Activated T-helper 1 cell treated with anti-CD3 and anti-CD28 coated beads, Interleukin-12 subunit alpha, Interleukin-12 subunit beta, Interleukin-2, Interleukin-4 antibody, amounts not matched to agents 30 ng/mL and 10 ng/mL and 1 ng/mL, durations not matched to agents 14 hours and 24 hours and 36 hours (primary cell): ENCODE measurements at regions of chr5 and their contacts with region 1.

Region 1: DNA sequence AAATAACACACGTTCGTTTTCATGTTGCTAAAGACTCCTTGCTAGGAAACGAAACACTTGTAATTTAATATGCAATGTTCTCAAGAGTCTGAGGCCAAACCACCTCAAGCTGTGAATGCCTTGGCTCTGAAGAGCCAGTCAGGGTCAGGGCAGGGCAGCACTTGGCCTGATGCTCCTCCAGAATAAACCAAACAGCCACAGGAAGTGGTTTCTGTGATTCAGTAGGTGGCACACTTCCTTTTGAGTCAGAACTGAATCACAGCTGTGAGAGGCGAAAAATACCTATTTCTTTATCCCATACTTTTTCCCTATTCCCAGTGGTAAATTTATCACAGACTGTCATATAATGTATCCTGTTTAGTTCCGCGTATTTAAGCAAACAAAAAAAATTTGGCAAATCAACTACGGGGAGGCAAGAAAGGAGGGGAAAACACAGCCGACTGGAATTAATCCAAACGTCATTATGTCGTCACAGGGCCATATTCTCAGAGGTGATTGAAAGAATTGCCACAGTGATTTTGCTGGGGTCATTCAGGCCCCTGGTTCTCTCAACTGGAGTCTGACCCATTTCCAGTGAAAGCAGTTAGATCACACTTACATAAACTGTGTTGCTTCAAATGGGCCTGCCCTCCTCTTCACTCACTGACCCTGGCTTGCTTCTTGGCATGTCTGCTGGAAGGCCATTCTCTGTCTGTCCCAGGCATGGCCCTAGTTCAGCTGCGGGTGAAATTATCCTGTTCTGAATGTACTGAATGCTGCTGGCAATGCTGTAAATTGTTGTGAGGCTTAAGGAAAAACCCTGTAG is 71.2 kb downstream of the ARRDC3 start:
- DNase-seq: peak; percentile 60
- H3K4me3 Mint-ChIP-seq: peak overlapping the region; percentile 77
- H3K27ac Mint-ChIP-seq: peak overlapping the region; percentile 87
- H3K4me1 Mint-ChIP-seq: peaks cover 46% of the 10 kb centered on the region
- H3K27me3 Mint-ChIP-seq: no peaks in the 10 kb centered on the region

Region 2: DNA sequence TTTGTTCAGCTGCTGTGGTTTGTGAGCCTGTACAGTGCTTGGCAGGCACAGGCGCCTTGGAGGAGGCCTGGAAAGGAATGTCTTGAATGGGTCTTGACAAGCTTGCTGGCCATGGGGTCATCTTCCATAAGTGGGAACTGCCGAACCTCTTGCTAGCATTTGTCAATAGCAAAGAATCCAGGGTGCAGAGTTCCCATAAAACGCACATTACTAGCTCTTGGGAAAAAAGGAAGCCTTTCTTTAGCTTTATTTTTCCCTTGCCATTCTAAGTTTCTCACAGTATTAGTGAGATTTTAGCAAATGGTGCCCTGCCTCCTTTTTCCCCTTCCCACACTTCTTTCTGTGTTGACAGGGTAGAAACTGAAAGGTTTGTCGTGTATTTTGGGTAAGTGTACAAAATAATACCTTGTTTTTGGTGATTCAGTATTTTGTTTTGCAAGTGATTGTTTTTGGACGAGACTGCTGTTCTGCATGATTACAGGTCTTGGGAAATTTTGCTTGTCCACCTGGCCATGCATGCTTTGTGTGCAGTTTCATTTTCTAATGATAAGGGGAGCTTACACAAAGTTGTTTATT is 671.3 kb before region 1 on chr5:
- intact Hi-C with region 1: no loop called
- DNase-seq: no peak
- H3K4me3 Mint-ChIP-seq: no peak overlapping the region
- H3K27ac Mint-ChIP-seq: no peak overlapping the region
- H3K4me1 Mint-ChIP-seq: no peaks in the 10 kb centered on the region
- H3K27me3 Mint-ChIP-seq: no peaks in the 10 kb centered on the region

Region 3: GRCh38 chr5:91059409-91059808 is 252.5 kb before region 1 on chr5:
- intact Hi-C with region 1: no loop called
- DNase-seq: no peak
- H3K4me3 Mint-ChIP-seq: no peak overlapping the region
- H3K27ac Mint-ChIP-seq: no peak overlapping the region
- H3K4me1 Mint-ChIP-seq: peaks cover 19% of the 10 kb centered on the region
- H3K27me3 Mint-ChIP-seq: peaks cover 48% of the 10 kb centered on the region

Region 4: DNA sequence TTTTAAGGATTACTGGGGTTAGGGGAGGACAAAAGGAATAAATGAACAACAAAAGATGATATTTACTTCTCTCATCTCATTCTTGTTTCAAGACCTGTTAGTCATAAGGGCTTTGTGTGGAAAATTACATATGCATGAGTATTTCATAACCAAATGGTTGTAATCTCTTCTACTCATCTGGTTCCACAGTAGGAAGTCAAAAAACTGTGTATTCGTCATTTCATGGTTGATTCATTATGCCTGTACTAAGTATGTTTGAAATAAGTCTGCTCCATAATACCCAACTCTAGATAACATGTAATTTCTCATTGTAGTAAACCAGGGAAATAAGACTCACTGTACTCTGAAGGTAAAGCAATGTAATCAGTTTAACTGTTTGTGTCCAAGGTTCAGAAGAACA is 141.6 kb before region 1 on chr5:
- intact Hi-C with region 1: loop called (anchors 1 kb)
- DNase-seq: no peak
- H3K4me3 Mint-ChIP-seq: no peak overlapping the region
- H3K27ac Mint-ChIP-seq: peak overlapping the region; percentile 24
- H3K4me1 Mint-ChIP-seq: peaks cover 17% of the 10 kb centered on the region
- H3K27me3 Mint-ChIP-seq: peaks cover 11% of the 10 kb centered on the region

Region 5: DNA sequence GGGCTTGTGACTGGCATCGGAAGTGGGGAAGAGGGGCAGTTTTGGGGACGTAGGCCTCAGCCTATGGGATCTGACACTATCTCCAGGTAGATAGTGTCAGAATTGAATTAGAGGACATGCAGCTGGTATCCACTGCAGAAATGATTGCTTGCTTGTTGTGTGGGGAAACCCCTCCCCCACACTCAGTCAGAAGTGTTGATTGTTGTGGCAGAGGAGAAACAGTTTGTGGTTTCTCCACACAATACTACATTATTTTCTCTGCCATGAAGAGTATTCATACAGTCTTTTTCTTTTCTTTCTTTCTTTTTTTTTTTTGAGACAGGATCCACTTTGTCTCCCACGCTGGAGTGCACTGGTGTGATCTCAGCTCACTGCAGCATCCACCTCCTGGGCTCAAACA is 42.7 kb before region 1 on chr5:
- intact Hi-C with region 1: loop called (anchors 1 kb)
- DNase-seq: peak; percentile 41
- H3K4me3 Mint-ChIP-seq: no peak overlapping the region
- H3K27ac Mint-ChIP-seq: peak overlapping the region; percentile 49
- H3K4me1 Mint-ChIP-seq: peaks cover 40% of the 10 kb centered on the region
- H3K27me3 Mint-ChIP-seq: peaks cover 17% of the 10 kb centered on the region

Region 6: DNA sequence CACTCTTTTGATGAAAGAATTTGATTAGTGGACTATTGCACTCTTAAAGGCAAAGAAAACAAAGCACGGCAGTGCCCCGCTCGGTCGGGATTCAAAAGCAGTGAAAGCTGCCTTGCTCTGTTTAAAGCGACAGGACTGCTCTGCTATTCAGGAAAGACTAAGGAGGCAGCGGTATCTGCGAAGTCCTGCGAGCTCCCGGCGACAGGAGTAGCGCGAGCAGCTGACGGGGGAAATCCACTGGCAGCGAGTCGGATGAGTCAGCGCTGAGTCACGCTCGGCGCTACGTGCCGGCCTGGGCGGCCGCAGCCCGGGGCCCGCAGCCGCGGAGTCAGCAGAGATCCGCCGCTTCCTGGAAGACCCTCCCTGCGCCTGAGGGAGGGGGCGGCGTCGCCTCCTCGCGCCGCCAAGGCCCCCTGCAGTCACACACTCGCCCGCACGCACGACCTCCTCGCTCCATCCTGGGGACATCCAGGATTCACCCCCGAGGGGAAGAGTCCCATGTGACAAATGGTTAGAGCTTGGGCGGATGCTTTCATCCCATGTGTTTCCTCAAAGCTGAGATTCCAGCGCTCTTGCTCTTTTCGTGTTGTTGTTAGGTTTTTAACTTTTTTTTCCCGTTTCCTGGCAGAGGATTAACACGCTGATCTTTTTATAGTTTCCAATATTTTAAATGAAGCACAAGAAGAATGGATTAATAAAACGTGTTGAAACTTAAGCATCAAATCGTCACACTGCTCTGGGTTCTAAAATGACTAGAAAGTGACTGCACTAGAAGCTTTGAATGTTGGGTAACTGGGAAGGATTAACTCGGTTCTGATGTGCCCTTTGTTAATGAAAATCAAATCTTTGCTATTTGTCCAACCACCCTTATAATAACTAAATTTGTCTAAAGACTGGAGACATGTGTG is 31.3 kb before region 1 on chr5:
- intact Hi-C with region 1: loop called (anchors 1 kb)
- DNase-seq: peak; percentile 84
- H3K4me3 Mint-ChIP-seq: peak overlapping the region; percentile 81
- H3K27ac Mint-ChIP-seq: peak overlapping the region; percentile 82
- H3K4me1 Mint-ChIP-seq: peaks cover 40% of the 10 kb centered on the region
- H3K27me3 Mint-ChIP-seq: peaks cover 4% of the 10 kb centered on the region

Region 7: DNA sequence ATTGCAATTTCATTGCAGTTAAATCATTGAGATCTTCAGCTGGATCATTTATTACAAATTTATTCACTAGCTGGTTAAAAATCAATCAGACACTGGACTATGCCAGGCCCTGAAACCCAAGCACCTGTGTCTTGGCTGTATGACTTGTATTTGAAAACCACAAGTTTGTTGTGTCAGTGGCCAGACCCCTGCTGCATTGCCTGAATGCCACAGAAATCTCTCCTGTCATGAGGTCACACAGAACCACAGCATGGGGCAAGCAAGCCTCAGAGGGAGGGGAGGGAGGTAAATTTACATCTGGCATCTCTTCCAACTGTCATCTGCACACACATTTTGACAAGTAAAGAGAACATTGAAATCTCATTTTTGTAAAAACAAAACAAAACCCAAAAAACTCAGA is 18.8 kb before region 1 on chr5:
- intact Hi-C with region 1: loop called (anchors 2 kb)
- DNase-seq: no peak
- H3K4me3 Mint-ChIP-seq: no peak overlapping the region
- H3K27ac Mint-ChIP-seq: no peak overlapping the region
- H3K4me1 Mint-ChIP-seq: peaks cover 25% of the 10 kb centered on the region
- H3K27me3 Mint-ChIP-seq: no peaks in the 10 kb centered on the region

Region 8: GRCh38 chr5:91332267-91333045 is 20.6 kb after region 1 on chr5:
- intact Hi-C with region 1: loop called (anchors 1 kb)
- DNase-seq: no peak
- H3K4me3 Mint-ChIP-seq: no peak overlapping the region
- H3K27ac Mint-ChIP-seq: peak overlapping the region; percentile 37
- H3K4me1 Mint-ChIP-seq: peaks cover 33% of the 10 kb centered on the region
- H3K27me3 Mint-ChIP-seq: peaks cover 11% of the 10 kb centered on the region

Region 9: GRCh38 chr5:91361055-91361701 is 49.3 kb after region 1 on chr5:
- intact Hi-C with region 1: loop called (anchors 1 kb)
- DNase-seq: no peak
- H3K4me3 Mint-ChIP-seq: no peak overlapping the region
- H3K27ac Mint-ChIP-seq: peak overlapping the region; percentile 67
- H3K4me1 Mint-ChIP-seq: peaks cover 14% of the 10 kb centered on the region
- H3K27me3 Mint-ChIP-seq: peaks cover 23% of the 10 kb centered on the region